GM12878 (cell line): ENCODE measurements at regions of chr14 and their contacts with region 1.

Region 1: DNA sequence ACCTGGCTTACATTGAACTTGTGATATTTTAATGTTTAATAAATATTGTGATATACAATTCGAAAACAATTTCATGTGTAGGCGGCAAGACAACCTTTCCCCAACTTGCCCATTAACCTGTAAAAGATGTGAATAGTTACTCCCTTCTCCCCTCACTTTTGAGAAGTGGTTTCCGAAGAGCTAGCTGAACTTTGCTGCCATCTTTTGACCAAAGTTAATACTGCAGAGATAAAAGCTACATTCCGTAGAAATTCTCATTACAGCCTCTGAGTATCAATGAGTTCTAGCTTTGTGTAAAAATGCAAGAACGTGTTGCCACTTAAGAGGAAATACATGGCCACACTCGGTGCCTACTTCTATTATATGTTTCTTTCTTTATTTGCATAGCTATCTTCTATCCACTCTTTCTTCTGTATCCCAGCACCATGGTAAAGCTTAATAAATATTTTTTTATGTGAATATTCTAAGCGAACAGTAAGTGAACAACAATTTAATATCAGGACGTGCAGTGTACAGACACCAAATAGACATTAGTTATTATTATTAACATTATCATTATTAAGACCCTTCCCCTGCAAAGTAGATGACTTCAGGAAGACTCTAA is 105.1 kb upstream of the TMEM260 start:
- DNase-seq: no peak
- ATAC-seq: peak; percentile 63
- H3K4me3 ChIP-seq: no peak overlapping the region
- H3K27ac ChIP-seq: no peak overlapping the region
- H3K4me1 ChIP-seq: no peaks in the 10 kb centered on the region
- H3K27me3 ChIP-seq: no peaks in the 10 kb centered on the region
- CTCF ChIP-seq: peak; percentile 67 to 82 (median 81)
- EP300 ChIP-seq: no peak
- POLR2A ChIP-seq: no peak
- RAD21 ChIP-seq: peak; percentile 86

Region 2: GRCh38 chr14:55438066-55438683 is 1036.3 kb before region 1 on chr14:
- CTCF ChIA-PET with region 1: interaction called, 19 read pairs
- POLR2A ChIA-PET with region 1: no interaction called
- RAD21 ChIA-PET with region 1: interaction called, 6 read pairs
- SMC1A ChIA-PET with region 1: interaction called, 9 read pairs
- in situ Hi-C with region 1: no loop called
- intact Hi-C with region 1: no loop called
- DNase-seq: no peak
- ATAC-seq: peak; percentile 82
- H3K4me3 ChIP-seq: no peak overlapping the region
- H3K27ac ChIP-seq: no peak overlapping the region
- H3K4me1 ChIP-seq: no peaks in the 10 kb centered on the region
- H3K27me3 ChIP-seq: no peaks in the 10 kb centered on the region
- CTCF ChIP-seq: peak; percentile 37 to 66 (median 54); a peak in 5 of 6 replicates
- EP300 ChIP-seq: no peak
- POLR2A ChIP-seq: no peak
- RAD21 ChIP-seq: peak; percentile 69

Region 3: GRCh38 chr14:55707365-55707804 is 767.1 kb before region 1 on chr14:
- CTCF ChIA-PET with region 1: interaction called, 5 read pairs
- POLR2A ChIA-PET with region 1: no interaction called
- RAD21 ChIA-PET with region 1: interaction called, 4 read pairs
- SMC1A ChIA-PET with region 1: interaction called, 4 read pairs
- in situ Hi-C with region 1: loop called (anchors 10 kb)
- intact Hi-C with region 1: loop called (anchors 5 kb)
- DNase-seq: no peak
- ATAC-seq: no peak
- H3K4me3 ChIP-seq: no peak overlapping the region
- H3K27ac ChIP-seq: no peak overlapping the region
- H3K4me1 ChIP-seq: no peaks in the 10 kb centered on the region
- H3K27me3 ChIP-seq: no peaks in the 10 kb centered on the region
- CTCF ChIP-seq: peak; percentile 41 to 68 (median 47); a peak in 4 of 6 replicates
- EP300 ChIP-seq: no peak
- POLR2A ChIP-seq: no peak
- RAD21 ChIP-seq: peak; percentile 66

Region 4: GRCh38 chr14:55731881-55732498 is 742.5 kb before region 1 on chr14:
- CTCF ChIA-PET with region 1: interaction called, 67 read pairs
- POLR2A ChIA-PET with region 1: no interaction called
- RAD21 ChIA-PET with region 1: interaction called, 29 read pairs
- SMC1A ChIA-PET with region 1: interaction called, 11 read pairs
- in situ Hi-C with region 1: no loop called
- intact Hi-C with region 1: loop called (anchors 10 kb)
- DNase-seq: no peak
- ATAC-seq: peak; percentile 77
- H3K4me3 ChIP-seq: no peak overlapping the region
- H3K27ac ChIP-seq: no peak overlapping the region
- H3K4me1 ChIP-seq: no peaks in the 10 kb centered on the region
- H3K27me3 ChIP-seq: no peaks in the 10 kb centered on the region
- CTCF ChIP-seq: peak; percentile 53 to 64 (median 63)
- EP300 ChIP-seq: no peak
- POLR2A ChIP-seq: no peak
- RAD21 ChIP-seq: peak; percentile 64

Region 5: GRCh38 chr14:56247468-56248200 is 226.9 kb before region 1 on chr14:
- CTCF ChIA-PET with region 1: no interaction called
- POLR2A ChIA-PET with region 1: interaction called, 3 read pairs
- RAD21 ChIA-PET with region 1: no interaction called
- SMC1A ChIA-PET with region 1: no interaction called
- in situ Hi-C with region 1: no loop called
- intact Hi-C with region 1: loop called (anchors 5 kb)
- DNase-seq: no peak
- ATAC-seq: no peak
- H3K4me3 ChIP-seq: no peak overlapping the region
- H3K27ac ChIP-seq: no peak overlapping the region
- H3K4me1 ChIP-seq: no peaks in the 10 kb centered on the region
- H3K27me3 ChIP-seq: no peaks in the 10 kb centered on the region; a peak in 1 of 4 replicates
- CTCF ChIP-seq: 0 out of 6 replicates have a peak, but pooled peaks of 2 of the 3 experiments have one; percentile 4 to 17
- EP300 ChIP-seq: no peak
- POLR2A ChIP-seq: no peak
- RAD21 ChIP-seq: no peak

Region 6: DNA sequence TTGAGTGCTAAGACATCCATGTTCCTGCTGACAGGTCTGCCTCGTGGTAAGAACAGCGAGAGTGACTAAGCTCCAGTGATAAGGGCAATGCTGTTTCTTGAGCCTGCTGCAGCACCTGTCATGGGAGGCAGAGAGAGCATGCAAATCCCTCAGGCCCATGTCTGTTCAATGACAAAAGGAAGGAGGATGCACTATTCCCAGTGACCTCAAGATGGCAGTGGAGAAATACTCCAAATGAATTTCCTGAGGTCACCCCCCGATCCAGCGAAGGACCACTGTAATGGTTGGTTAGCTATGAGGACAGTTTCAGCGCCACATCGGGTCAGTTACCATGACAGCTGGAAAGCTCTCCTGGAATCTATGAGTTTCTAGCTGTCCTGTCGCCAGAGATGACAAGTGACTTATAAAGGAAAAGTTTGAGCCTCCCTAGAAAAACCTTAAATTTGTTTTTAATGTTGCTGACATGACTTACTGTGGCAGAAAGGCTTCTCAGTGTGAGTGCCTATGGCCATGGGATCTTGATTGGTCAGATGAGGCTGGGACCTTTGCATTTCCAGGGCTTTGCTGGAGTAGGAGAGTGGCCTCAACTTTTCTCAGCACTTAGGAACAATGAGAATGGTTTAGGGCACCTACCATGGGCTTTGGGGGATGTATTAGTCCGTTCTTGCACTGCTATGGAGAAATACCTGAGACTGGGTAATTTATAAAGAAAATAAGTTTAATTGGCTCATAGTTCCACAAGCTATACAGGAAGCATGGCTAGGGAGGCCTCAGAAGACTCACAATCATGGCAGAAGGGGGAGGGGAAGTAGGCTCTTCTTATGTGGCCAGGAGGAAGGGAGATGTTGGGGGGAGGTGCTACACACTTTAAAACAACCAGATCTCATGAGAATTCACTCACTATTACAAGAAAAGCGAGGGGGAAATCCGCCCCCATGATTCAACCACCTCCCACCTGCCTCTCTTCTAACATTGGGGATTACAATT is 17.1 kb after region 1 on chr14:
- CTCF ChIA-PET with region 1: interaction called, 20 read pairs
- POLR2A ChIA-PET with region 1: no interaction called
- RAD21 ChIA-PET with region 1: interaction called, 4 read pairs
- SMC1A ChIA-PET with region 1: interaction called, 7 read pairs
- in situ Hi-C with region 1: no loop called
- intact Hi-C with region 1: no loop called
- DNase-seq: peak; percentile 11
- ATAC-seq: peak; percentile 83
- H3K4me3 ChIP-seq: no peak overlapping the region
- H3K27ac ChIP-seq: no peak overlapping the region
- H3K4me1 ChIP-seq: no peaks in the 10 kb centered on the region
- H3K27me3 ChIP-seq: no peaks in the 10 kb centered on the region
- CTCF ChIP-seq: peak; percentile 57 to 71 (median 65)
- EP300 ChIP-seq: no peak
- POLR2A ChIP-seq: no peak
- RAD21 ChIP-seq: peak; percentile 57

Region 7: GRCh38 chr14:56501909-56502530 is 27.5 kb after region 1 on chr14:
- CTCF ChIA-PET with region 1: no interaction called
- POLR2A ChIA-PET with region 1: no interaction called
- RAD21 ChIA-PET with region 1: no interaction called
- SMC1A ChIA-PET with region 1: no interaction called
- in situ Hi-C with region 1: no loop called
- intact Hi-C with region 1: no loop called
- DNase-seq: no peak
- ATAC-seq: no peak
- H3K4me3 ChIP-seq: no peak overlapping the region
- H3K27ac ChIP-seq: no peak overlapping the region
- H3K4me1 ChIP-seq: no peaks in the 10 kb centered on the region
- H3K27me3 ChIP-seq: no peaks in the 10 kb centered on the region; a peak in 1 of 4 replicates
- CTCF ChIP-seq: no peak
- EP300 ChIP-seq: no peak
- POLR2A ChIP-seq: no peak
- RAD21 ChIP-seq: no peak